Naive thymus-derived CD4-positive, alpha-beta T cell (primary cell): ENCODE measurements at regions of chr2 and their contacts with region 1.

Region 1: DNA sequence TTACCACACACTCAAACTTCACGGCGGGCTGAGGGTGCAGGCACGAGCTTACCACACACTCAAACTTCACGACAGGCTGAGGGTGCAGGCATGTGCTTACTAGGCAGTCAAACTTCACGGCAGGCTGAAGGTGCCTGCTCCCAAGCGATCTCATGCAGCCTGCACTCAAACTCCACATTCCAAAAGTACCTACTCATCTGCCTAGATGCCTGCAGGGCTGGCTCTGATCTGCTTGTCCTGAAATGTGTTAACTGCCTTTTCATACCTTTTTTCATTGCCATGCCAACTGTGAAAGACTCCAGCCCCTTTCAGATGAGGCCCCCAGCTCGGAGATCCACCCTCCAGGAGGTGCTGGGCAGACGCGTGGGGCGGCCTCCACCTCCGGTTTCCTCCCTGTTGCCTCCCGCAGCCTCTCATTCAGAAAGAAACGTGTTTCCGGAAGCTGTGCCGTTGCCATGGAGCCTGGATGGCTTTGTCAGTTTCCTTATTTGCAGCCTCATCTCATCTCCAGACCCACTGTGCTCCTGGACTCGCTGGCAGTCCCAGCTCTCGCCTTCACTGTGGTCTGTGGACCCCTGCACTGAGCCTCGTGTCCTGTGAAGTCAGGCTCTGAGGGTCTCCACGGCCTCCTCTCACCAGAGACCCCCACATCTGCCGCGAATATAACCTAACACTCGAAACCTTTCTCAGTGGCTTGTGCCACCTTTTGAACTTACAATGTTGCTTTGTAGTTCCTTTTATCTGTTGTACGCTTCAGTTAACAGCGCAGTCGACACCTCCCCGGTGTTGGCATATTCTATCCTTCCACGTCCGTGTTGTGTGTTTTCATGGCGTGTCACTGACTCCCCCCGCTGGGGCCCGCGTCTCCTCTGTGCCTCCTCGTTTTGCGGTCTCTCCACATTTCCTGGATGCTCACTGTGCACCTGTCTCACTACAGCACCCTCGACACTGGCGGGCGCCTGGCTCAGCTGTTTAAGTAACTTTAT is 106.1 kb upstream of the ALKAL2 start:
- DNase-seq: peak; percentile 19 to 84 (median 77)
- ATAC-seq: peak; percentile 87
- H3K4me3 ChIP-seq: peak overlapping the region; percentile 49
- H3K4me3 Mint-ChIP-seq: peak overlapping the region; percentile 76 to 91 (median 84)
- H3K27ac ChIP-seq: peak overlapping the region; percentile 69
- H3K27ac Mint-ChIP-seq: peak overlapping the region; percentile 75 to 97 (median 95)
- H3K4me1 ChIP-seq: peaks cover 0 to 4% of the 10 kb centered on the region in 2 donors
- H3K4me1 Mint-ChIP-seq: peaks cover 9 to 33% (median 21%) of the 10 kb centered on the region in 7 donors
- H3K27me3 ChIP-seq: no peaks in the 10 kb centered on the region
- H3K27me3 Mint-ChIP-seq: no peaks in the 10 kb centered on the region

Region 2: DNA sequence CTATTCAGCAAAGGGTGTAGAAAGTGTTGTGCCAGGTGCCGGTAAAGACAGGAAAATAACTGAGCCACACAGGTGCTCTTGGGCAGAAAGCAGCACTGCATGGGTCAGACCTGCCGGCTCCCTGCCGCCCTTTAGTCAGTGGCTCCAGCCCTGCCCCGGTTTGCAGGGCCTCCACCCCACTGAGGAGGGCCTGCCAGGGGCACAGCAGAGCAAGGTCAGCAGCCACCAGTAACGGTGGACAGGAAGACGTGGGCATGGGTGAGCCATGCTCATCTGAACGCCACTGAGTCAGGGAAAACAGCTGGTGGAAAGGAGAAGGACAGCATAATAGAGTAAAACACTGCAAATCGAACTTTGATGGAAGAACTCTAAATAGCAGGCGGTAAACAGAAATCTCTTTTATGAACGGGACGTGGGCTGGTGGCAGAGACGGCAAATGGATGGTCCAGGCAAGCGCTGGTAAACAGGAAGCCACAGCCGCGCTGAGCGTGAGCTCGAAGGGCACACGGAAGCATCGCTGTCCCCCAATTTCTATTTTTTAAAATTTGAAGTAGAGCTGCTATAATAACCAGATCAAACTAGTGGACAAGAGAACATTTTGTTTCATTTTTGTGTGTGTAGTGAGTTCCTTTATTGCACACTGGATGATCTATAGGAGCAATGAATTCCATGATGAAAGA is 35.7 kb after region 1 on chr2:
- CTCF ChIA-PET with region 1: no interaction called
- POLR2A ChIA-PET with region 1: interaction called, 5 read pairs
- intact Hi-C with region 1: loop called (anchors 2 kb)
- DNase-seq: peak in 4 of 9 donors; percentile 7 to 28 (median 16)
- ATAC-seq: peak; percentile 72
- H3K4me3 ChIP-seq: peak overlapping the region; percentile 56
- H3K4me3 Mint-ChIP-seq: peak overlapping the region; percentile 49 to 91 (median 80)
- H3K27ac ChIP-seq: peak overlapping the region; percentile 46
- H3K27ac Mint-ChIP-seq: peak overlapping the region; percentile 57 to 96 (median 83)
- H3K4me1 ChIP-seq: peaks cover 19% of the 10 kb centered on the region in 2 donors
- H3K4me1 Mint-ChIP-seq: peaks cover 19 to 36% (median 24%) of the 10 kb centered on the region in 7 donors
- H3K27me3 ChIP-seq: no peaks in the 10 kb centered on the region
- H3K27me3 Mint-ChIP-seq: peaks cover 0 to 4% (median 2%) of the 10 kb centered on the region in 5 donors

Region 3: DNA sequence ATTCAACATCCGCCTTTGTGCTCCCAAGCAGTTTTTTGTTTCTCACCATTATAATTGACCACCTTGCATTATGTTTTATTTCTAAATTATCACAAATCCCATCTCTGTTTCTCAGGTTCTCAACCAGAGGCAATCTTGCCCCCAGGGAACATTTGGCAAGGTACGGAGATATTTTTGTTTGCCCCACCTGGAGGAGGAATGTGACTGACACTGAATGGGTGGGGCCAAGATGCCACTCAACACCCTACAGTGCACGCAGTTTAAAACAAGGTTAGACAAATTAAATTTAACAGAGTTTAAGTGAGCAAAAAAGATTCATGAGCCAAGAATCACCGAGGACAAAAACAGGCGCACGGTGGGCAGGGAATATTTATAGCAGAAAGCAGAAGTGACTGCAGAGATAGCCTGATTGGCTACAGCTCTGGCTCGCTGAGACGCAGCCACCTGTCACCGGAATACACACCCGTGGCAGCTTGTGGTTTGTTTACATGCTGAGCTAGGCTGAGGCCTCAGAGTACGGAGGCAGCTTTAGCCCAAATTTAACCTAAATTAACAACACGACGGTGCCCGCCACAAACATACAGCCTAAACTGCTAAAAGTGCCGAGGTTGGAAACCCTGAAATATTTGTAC is 43.9 kb after region 1 on chr2:
- CTCF ChIA-PET with region 1: no interaction called
- POLR2A ChIA-PET with region 1: interaction called, 10 read pairs
- intact Hi-C with region 1: loop called (anchors 1 to 2 kb)
- DNase-seq: peak; percentile 35 to 87 (median 80)
- ATAC-seq: peak; percentile 99
- H3K4me3 ChIP-seq: peak overlapping the region; percentile 47
- H3K4me3 Mint-ChIP-seq: peak overlapping the region; percentile 72 to 93 (median 83)
- H3K27ac ChIP-seq: peak overlapping the region; percentile 52
- H3K27ac Mint-ChIP-seq: peak overlapping the region; percentile 66 to 98 (median 95)
- H3K4me1 ChIP-seq: peaks cover 18% of the 10 kb centered on the region in 2 donors
- H3K4me1 Mint-ChIP-seq: peaks cover 14 to 31% (median 24%) of the 10 kb centered on the region in 7 donors
- H3K27me3 ChIP-seq: no peaks in the 10 kb centered on the region
- H3K27me3 Mint-ChIP-seq: peaks cover 0 to 2% (median 0%) of the 10 kb centered on the region in 5 donors

Region 4: DNA sequence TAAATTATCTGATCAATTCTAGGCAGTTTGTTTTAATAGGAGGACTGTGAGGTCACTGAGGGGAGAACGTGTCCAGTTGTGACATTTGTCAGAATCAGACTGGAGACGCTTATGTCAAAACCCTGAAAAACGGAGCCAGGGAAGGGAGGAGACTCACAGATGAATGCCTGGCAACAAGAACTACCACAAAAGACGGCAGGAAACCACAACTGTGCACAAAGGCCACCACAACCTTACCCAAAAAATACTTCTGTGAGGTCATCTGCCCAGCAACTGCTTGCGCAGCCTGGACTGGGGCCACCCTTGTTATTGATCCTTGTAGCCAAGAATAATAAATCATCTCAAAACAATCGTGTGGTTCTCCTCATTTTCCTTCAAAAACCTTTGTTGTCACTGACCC is 66.9 kb after region 1 on chr2:
- CTCF ChIA-PET with region 1: no interaction called
- POLR2A ChIA-PET with region 1: no interaction called
- intact Hi-C with region 1: loop called (anchors 1 to 10 kb)
- DNase-seq: peak in 8 of 9 donors; percentile 37 to 82 (median 77)
- ATAC-seq: peak; percentile 87
- H3K4me3 ChIP-seq: no peak overlapping the region
- H3K4me3 Mint-ChIP-seq: peak overlapping the region; percentile 52 to 84 (median 78)
- H3K27ac ChIP-seq: no peak overlapping the region
- H3K27ac Mint-ChIP-seq: peak overlapping the region in 7 of 9 donors; percentile 52 to 93 (median 73)
- H3K4me1 ChIP-seq: peaks cover 20 to 21% of the 10 kb centered on the region in 2 donors
- H3K4me1 Mint-ChIP-seq: peaks cover 16 to 36% (median 29%) of the 10 kb centered on the region in 7 donors
- H3K27me3 ChIP-seq: no peaks in the 10 kb centered on the region
- H3K27me3 Mint-ChIP-seq: peaks cover 61 to 86% (median 73%) of the 10 kb centered on the region in 5 donors

Region 5: DNA sequence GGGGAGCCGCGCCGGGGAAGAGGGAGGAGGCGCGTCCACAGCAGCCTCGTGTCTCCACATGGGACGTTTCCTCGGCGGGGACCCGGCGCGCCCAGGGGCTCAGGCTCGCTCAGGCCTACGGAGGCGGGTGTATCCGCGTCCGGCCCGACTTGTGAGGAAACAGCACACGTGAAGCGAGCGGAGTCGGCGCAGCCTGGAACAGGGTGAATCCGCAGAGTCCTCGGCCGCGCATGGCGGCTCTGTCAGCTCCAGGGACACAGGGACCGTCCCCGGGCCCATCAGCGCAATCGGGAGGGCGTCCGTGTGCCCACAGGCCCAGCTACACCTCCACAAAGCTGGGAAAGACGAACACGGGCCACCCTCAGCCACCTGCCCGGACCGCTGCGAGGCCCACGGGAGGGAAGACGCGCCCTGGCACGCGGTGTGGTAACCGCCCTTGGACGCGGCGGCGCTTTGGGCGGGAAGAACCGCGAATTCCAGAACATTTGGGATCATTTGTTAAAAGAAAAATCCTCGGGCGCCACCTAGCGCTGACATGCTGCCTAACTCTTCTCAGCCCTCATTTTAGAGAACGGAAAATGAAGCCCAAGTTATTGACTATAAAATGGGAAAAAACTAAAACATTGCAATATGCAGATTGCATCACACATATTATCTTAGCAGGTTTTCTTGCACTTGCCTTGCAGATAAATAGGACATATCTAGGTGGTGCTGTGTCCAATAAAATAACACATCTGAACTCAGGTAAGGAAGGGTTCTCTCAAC is 242.8 kb after region 1 on chr2:
- CTCF ChIA-PET with region 1: interaction called, 3 read pairs
- POLR2A ChIA-PET with region 1: no interaction called
- intact Hi-C with region 1: loop called in 1 of 2 experiments (anchors 1 kb)
- DNase-seq: peak; percentile 27 to 66 (median 45)
- ATAC-seq: peak; percentile 72
- H3K4me3 ChIP-seq: peak overlapping the region; percentile 62
- H3K4me3 Mint-ChIP-seq: peak overlapping the region; percentile 78 to 90 (median 84)
- H3K27ac ChIP-seq: peak overlapping the region; percentile 59
- H3K27ac Mint-ChIP-seq: peak overlapping the region in 8 of 9 donors; percentile 2 to 86 (median 74)
- H3K4me1 ChIP-seq: no peaks in the 10 kb centered on the region
- H3K4me1 Mint-ChIP-seq: peaks cover 0 to 5% (median 0%) of the 10 kb centered on the region in 7 donors
- H3K27me3 ChIP-seq: no peaks in the 10 kb centered on the region
- H3K27me3 Mint-ChIP-seq: peaks cover 0 to 7% (median 0%) of the 10 kb centered on the region in 5 donors

Region 6: DNA sequence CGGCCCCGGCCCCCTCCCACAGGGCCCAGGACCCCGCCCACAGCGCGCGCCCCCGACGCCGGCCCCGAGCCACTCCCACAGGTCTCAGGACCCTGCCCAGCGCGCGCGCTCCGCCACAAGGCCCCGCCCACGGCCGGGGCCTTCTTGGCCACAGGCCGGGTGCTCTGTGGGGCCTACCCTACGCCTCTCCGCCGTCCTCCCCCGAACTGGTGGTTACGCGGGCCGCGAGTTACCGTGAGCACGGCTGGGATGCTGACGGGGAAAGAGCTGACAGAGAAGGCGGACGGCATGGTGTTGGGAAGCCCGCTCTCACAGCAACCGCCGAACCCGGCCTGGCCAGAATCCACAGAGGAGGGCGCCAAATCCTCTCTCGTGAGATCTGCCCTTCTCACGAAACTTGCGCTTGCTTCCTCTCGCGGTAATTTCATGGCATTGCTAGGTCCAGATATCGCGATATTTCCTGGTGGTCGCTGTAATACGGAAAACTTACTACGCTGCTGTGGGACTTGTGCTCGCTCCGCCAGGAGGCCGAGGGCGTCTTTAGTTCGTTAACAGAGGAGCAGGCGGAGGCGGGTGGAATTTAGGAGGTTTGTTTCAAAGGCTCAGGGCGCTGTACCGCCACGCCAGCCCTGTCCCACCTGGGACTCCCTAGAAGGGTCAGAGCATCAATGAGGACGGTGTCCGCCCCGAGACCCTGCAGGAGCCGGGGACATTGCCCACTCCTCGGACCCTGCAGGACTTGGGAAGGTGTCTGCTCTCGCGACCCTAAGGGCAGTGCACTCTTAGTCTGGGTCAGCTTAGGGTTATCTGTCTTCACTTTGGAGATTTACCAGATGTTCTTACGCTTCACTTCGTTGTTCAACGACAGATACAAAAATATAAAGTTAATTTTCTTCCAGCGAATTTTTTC is 283.3 kb after region 1 on chr2 and contains the start of gene TMEM18:
- CTCF ChIA-PET with region 1: no interaction called
- POLR2A ChIA-PET with region 1: no interaction called
- intact Hi-C with region 1: loop called in 1 of 2 experiments (anchors 2 kb)
- DNase-seq: peak in 8 of 9 donors; percentile 97 to 100 (median 99)
- ATAC-seq: peak; percentile 93
- H3K4me3 ChIP-seq: peak within 1 kb of the TSS; percentile 95
- H3K4me3 Mint-ChIP-seq: peak within 1 kb of the TSS; percentile 93 to 100 (median 98)
- H3K27ac ChIP-seq: peak within 1 kb of the TSS; percentile 100
- H3K27ac Mint-ChIP-seq: peak within 1 kb of the TSS; percentile 95 to 100 (median 99)
- H3K4me1 ChIP-seq: peaks cover 0 to 4% of the 10 kb centered on the region in 2 donors
- H3K4me1 Mint-ChIP-seq: peaks cover 23 to 49% (median 40%) of the 10 kb centered on the region in 7 donors
- H3K27me3 ChIP-seq: no peaks in the 10 kb centered on the region
- H3K27me3 Mint-ChIP-seq: no peaks in the 10 kb centered on the region
- total RNA-seq, gene TMEM18: 23.3 to 39.8 (median 33.2) TPM